PC-9 (cell line): ENCODE measurements at regions of chr12 and their contacts with region 1.

Region 1: GRCh38 chr12:71746983-71747611 is 7.6 kb upstream of the RAB21 start:
- DNase-seq: peak; percentile 30 to 60
- H3K4me3 ChIP-seq: no peak overlapping the region
- H3K27ac ChIP-seq: no peak overlapping the region
- H3K4me1 ChIP-seq: no peaks in the 10 kb centered on the region
- H3K27me3 ChIP-seq: peaks cover 8% of the 10 kb centered on the region; the same call in 1 of the 2 replicates
- CTCF ChIP-seq: peak; percentile 91

Region 2: GRCh38 chr12:71135812-71136176 is 611.3 kb before region 1 on chr12:
- CTCF ChIA-PET with region 1: no interaction called
- POLR2A ChIA-PET with region 1: no interaction called
- intact Hi-C with region 1: no loop called
- DNase-seq: no peak
- H3K4me3 ChIP-seq: no peak overlapping the region
- H3K27ac ChIP-seq: no peak overlapping the region
- H3K4me1 ChIP-seq: no peaks in the 10 kb centered on the region
- H3K27me3 ChIP-seq: no peaks in the 10 kb centered on the region
- CTCF ChIP-seq: no peak

Region 3: DNA sequence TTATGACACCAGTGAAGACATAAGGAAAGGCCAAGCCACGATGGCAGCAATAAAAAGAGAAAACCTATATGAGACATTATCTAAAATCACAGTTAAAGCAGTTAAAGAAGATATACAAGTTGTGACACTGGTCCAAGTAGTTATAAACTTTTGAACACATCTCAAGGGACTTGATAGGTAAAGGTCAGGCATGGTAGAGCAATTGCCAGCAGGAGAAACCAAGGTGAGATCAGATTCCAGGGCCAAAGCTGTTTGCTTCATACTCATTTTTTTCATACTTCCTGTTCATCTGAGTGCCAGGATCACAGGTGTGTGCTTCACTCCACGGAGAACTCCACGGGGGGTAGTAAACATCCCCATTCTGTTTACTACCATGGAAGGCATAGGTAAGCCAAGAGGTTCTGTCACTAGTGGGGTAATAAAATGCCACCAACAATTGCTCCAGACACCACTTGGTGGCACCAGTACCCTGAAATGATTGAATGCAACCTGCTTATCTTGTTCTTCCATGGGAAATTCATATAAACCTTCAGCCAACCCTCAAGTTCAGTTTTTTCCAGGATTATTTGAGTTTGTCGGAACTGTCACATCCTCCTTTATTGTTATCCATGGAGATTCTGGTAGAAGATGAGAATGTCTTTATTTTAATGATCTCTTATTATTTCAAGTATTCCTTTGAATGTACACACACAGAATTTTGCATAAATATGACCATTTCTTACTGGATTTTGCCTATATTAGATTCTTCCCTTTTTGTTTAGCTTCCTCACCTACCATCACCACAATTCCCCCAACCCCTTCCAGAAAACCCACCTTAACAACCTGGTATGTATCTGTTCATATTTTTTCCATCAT is 530.1 kb before region 1 on chr12:
- CTCF ChIA-PET with region 1: interaction called, 7 read pairs
- POLR2A ChIA-PET with region 1: no interaction called
- intact Hi-C with region 1: loop called (anchors 10 kb)
- DNase-seq: peak; percentile 18 to 36
- H3K4me3 ChIP-seq: no peak overlapping the region
- H3K27ac ChIP-seq: no peak overlapping the region
- H3K4me1 ChIP-seq: no peaks in the 10 kb centered on the region
- H3K27me3 ChIP-seq: no peaks in the 10 kb centered on the region
- CTCF ChIP-seq: peak; percentile 61

Region 4: DNA sequence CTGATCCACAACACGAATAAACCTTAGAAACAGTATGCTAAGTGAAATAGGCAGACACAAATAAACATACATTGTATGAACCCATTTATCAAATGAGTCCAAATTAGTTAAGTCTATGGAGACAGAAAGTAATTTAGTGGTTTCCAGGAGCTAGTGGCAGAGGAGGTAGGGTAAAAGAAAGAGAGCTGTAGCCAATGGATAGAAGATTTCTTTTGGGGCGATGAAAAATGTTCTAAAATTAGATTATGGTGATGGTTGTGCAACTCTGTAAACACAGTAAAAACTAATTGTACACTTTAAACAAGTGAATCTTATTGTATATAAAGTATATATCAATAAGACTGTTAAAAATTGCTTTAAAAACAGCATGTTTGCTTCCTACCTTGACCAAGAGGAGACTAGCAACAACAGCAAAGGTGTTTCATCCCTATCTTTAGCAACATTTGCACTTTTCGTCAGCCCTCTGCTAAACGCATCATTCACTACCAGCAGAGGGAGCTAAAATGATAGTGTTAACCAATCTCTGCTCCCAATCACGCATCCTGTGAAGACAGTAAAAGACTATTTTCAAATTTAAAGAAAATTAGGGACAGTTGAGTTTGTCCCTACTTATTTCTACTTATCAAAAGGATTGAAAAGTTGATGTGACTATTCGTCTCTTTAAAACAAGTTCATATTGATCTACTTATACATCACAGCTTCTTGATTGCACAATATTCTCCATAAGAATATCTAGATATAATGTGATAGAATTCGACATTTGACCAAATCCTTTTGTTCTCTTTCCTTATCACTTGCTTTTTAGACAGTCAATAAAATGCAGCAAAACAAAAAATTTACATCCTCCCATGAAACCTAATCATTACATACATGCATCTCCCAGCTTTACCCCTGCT is 331.5 kb before region 1 on chr12:
- CTCF ChIA-PET with region 1: interaction called, 3 read pairs
- POLR2A ChIA-PET with region 1: interaction called, 4 read pairs
- intact Hi-C with region 1: loop called (anchors 1 kb)
- DNase-seq: peak in 1 of 2 experiments; percentile 14
- H3K4me3 ChIP-seq: no peak overlapping the region
- H3K27ac ChIP-seq: no peak overlapping the region
- H3K4me1 ChIP-seq: no peaks in the 10 kb centered on the region
- H3K27me3 ChIP-seq: no peaks in the 10 kb centered on the region
- CTCF ChIP-seq: peak; percentile 75

Region 5: GRCh38 chr12:71636704-71637115 is 110.4 kb before region 1 on chr12:
- CTCF ChIA-PET with region 1: interaction called, 12 read pairs
- POLR2A ChIA-PET with region 1: interaction called, 3 read pairs
- intact Hi-C with region 1: loop called (anchors 5 kb)
- DNase-seq: peak in 1 of 2 experiments; percentile 53
- H3K4me3 ChIP-seq: no peak overlapping the region
- H3K27ac ChIP-seq: no peak overlapping the region
- H3K4me1 ChIP-seq: no peaks in the 10 kb centered on the region
- H3K27me3 ChIP-seq: no peaks in the 10 kb centered on the region
- CTCF ChIP-seq: peak; percentile 76

Region 6: GRCh38 chr12:71685914-71686665 is 61.0 kb before region 1 on chr12 and contains the start of gene TMEM19:
- CTCF ChIA-PET with region 1: interaction called, 17 read pairs
- POLR2A ChIA-PET with region 1: interaction called, 3 read pairs
- intact Hi-C with region 1: no loop called
- DNase-seq: peak; percentile 78 to 89
- H3K4me3 ChIP-seq: peak within 1 kb of the TSS; percentile 96
- H3K27ac ChIP-seq: peak within 1 kb of the TSS; percentile 72
- H3K4me1 ChIP-seq: peaks cover 13% of the 10 kb centered on the region
- H3K27me3 ChIP-seq: no peaks in the 10 kb centered on the region
- CTCF ChIP-seq: peak; percentile 20; the same call in 1 of the 2 replicates
- total RNA-seq, gene TMEM19: 17.3 and 39.5 TPM in 2 replicates

Region 7: DNA sequence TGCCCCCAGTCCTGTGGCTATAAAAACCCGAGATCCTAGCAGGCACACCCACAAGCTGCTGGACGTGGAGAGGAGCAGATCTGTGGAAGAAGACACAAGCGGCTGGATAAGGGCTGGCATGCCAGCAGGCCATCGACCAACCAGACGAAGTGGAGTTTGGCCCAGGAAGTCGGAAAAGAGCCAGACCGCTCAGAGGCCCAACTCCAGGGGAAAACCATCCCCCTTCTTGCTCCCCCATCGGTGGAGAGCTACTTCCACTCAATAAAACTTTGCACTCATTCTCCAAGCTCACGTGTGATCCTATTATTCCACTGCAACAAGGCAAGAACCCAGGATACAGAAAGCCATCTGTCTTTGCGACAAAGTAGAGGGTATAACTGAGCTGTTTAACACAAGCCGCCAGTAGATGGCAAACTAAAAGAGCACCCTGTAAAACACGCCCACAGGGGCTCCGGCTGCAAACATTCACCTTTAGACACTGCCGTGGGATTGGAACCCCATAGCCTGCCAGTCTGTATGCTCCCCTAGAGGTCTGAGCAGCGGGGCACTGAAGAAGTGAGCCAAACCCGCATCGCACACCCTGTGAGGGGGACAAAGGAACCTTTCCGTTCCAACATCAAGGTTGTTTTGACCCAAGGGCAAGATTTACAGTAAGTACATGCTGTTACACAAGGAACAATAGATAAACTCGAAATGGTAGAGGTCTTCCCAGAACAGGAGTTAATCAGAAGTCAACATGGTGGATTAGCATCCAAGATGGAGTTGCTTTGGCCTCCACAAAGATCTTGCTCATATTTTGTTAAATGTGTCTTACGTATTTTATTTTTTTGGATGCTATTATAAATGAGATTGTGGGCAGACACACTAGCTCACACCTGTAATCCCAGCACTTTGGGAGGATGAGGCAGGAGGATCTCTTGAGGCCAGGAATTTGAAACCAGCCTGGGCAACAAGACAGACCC is 15.1 kb before region 1 on chr12:
- CTCF ChIA-PET with region 1: no interaction called
- POLR2A ChIA-PET with region 1: no interaction called
- intact Hi-C with region 1: no loop called
- DNase-seq: no peak
- H3K4me3 ChIP-seq: no peak overlapping the region
- H3K27ac ChIP-seq: no peak overlapping the region
- H3K4me1 ChIP-seq: no peaks in the 10 kb centered on the region
- H3K27me3 ChIP-seq: no peaks in the 10 kb centered on the region
- CTCF ChIP-seq: no peak

Region 8: DNA sequence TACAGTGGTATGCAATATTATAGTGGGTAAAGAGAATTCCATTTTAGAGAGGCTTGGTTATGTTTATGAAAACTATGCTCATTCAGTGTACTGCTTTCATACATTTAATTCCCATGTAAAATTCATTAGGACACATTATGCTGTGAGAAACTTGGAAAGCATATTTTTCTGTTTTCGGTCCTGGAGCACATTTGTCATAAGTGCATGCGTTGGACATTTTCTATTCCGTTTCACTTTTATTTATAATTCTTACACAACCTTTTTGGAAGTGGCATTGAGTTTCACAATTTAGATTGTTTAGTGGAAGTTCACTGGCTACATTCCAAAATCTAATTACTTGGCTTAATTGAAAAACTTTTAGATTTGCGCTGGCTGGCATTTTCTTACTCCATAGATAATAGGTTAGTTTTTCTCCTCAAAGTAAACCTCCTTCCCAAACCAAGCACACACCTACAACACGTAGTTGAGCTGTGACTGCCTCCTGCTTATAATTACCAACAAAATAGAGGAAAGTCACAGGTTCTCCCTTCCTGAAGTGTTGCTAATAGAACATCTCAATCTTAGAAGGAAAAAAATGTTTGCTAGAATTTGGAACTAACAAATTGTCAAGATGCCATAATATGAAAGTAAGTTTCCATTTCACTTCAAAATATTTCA is 1463.6 kb after region 1 on chr12:
- CTCF ChIA-PET with region 1: no interaction called
- POLR2A ChIA-PET with region 1: no interaction called
- intact Hi-C with region 1: no loop called
- DNase-seq: no peak
- H3K4me3 ChIP-seq: no peak overlapping the region
- H3K27ac ChIP-seq: no peak overlapping the region
- H3K4me1 ChIP-seq: no peaks in the 10 kb centered on the region
- H3K27me3 ChIP-seq: no peaks in the 10 kb centered on the region
- CTCF ChIP-seq: no peak